Naive thymus-derived CD4-positive, alpha-beta T cell (primary cell): ENCODE measurements at regions of chr19 and their contacts with region 1.

Region 1: GRCh38 chr19:52897144-52897935 is at the start of gene ZNF320:
- DNase-seq: peak; percentile 78 to 92 (median 89)
- ATAC-seq: peak; percentile 100
- H3K4me3 ChIP-seq: peak within 1 kb of the TSS; percentile 96
- H3K4me3 Mint-ChIP-seq: peak within 1 kb of the TSS; percentile 88 to 96 (median 92)
- H3K27ac ChIP-seq: peak within 1 kb of the TSS; percentile 79
- H3K27ac Mint-ChIP-seq: peak within 1 kb of the TSS; percentile 19 to 94 (median 93)
- H3K4me1 ChIP-seq: peaks cover 4 to 5% of the 10 kb centered on the region in 2 donors
- H3K4me1 Mint-ChIP-seq: peaks cover 5 to 33% (median 17%) of the 10 kb centered on the region in 7 donors
- H3K27me3 ChIP-seq: no peaks in the 10 kb centered on the region
- H3K27me3 Mint-ChIP-seq: no peaks in the 10 kb centered on the region
- total RNA-seq, gene ZNF320: 4.5 to 13.4 (median 11.6) TPM

Region 2: DNA sequence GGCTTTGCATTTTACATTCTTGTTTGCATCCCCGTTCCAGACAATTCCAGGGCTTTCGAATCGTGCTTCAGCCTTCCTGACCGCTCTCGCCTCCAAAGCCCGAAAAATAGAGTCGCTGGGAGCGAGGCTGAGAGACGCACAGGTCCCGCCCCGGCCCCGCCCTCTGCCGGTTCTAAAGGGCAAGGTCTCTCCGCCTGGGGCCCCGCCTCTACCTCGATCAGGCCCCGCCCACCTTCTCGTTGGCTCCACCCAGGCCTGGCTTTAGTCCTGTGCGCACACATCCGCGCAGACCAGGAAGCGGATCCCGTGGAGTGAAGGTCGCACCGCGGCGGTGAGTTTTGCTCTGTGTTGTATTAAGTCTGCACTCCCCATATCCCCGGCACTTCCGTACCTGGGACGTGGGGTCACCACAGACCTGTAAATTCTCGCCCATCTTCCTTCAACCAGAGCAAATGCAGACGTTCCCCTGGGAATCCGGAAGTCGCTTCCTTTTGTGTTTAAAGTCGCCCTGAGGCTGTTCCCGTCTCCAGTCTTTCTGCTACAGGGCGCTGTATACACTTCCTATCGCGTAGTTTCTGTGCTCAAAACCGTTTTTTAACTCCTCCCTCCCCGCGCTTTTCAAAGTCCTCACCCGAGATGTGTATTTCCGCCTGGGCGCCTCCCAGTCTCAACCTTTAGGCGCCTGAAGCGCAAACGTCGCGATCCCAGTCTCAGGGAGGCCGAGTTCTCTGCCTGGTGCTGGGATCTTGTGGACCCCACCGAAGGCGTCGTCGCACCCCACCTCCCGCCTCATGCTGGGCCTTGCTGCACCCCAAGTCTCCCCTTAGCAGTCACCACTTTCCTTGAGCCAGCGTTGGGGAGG is 327.1 kb before region 1 on chr19 and contains the start of gene ZNF701:
- CTCF ChIA-PET with region 1: no interaction called
- POLR2A ChIA-PET with region 1: no interaction called
- intact Hi-C with region 1: loop called in 1 of 2 experiments (anchors 1 kb)
- DNase-seq: peak; percentile 92 to 99 (median 96)
- ATAC-seq: peak; percentile 100
- H3K4me3 ChIP-seq: peak within 1 kb of the TSS; percentile 78
- H3K4me3 Mint-ChIP-seq: peak within 1 kb of the TSS; percentile 88 to 99 (median 94)
- H3K27ac ChIP-seq: peak within 1 kb of the TSS; percentile 78
- H3K27ac Mint-ChIP-seq: peak within 1 kb of the TSS; percentile 92 to 98 (median 95)
- H3K4me1 ChIP-seq: peaks cover 10 to 13% of the 10 kb centered on the region in 2 donors
- H3K4me1 Mint-ChIP-seq: peaks cover 9 to 42% (median 37%) of the 10 kb centered on the region in 7 donors
- H3K27me3 ChIP-seq: no peaks in the 10 kb centered on the region
- H3K27me3 Mint-ChIP-seq: no peaks in the 10 kb centered on the region
- total RNA-seq, gene ZNF701: 11.7 to 43.3 (median 28.3) TPM

Region 3: DNA sequence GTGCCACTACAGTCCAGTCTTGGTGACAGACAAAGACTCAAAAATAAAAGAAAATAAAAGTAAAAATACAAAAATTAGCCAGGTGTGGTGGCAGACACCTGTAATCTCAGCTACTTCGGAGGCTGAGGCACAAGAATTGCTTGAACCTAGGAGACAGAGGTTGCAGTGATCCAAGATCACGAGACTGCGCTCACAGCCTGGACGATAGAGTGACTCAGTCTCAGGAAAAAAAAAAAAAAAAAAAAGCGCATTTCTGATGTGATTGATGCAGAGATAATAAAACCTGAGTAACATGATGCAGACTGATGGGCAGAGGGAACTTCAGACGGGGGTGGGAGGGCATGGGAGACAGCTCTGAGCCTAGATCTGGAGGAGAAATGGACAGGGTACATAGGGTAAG is 135.6 kb before region 1 on chr19:
- CTCF ChIA-PET with region 1: no interaction called
- POLR2A ChIA-PET with region 1: no interaction called
- intact Hi-C with region 1: no loop called
- DNase-seq: no peak
- ATAC-seq: no peak
- H3K4me3 ChIP-seq: no peak overlapping the region
- H3K4me3 Mint-ChIP-seq: no peak overlapping the region
- H3K27ac ChIP-seq: no peak overlapping the region
- H3K27ac Mint-ChIP-seq: no peak overlapping the region
- H3K4me1 ChIP-seq: no peaks in the 10 kb centered on the region
- H3K4me1 Mint-ChIP-seq: no peaks in the 10 kb centered on the region
- H3K27me3 ChIP-seq: no peaks in the 10 kb centered on the region
- H3K27me3 Mint-ChIP-seq: no peaks in the 10 kb centered on the region

Region 4: GRCh38 chr19:52778811-52779210 is 118.5 kb before region 1 on chr19:
- CTCF ChIA-PET with region 1: no interaction called
- POLR2A ChIA-PET with region 1: no interaction called
- intact Hi-C with region 1: no loop called
- DNase-seq: peak in 1 of 9 donors; percentile 55
- ATAC-seq: peak; percentile 54
- H3K4me3 ChIP-seq: no peak overlapping the region
- H3K4me3 Mint-ChIP-seq: peak overlapping the region in 2 of 10 donors; percentile 36 to 43
- H3K27ac ChIP-seq: no peak overlapping the region
- H3K27ac Mint-ChIP-seq: peak overlapping the region in 4 of 9 donors; percentile 20 to 81 (median 45)
- H3K4me1 ChIP-seq: peaks cover 0 to 13% of the 10 kb centered on the region in 2 donors
- H3K4me1 Mint-ChIP-seq: peaks cover 0 to 24% (median 5%) of the 10 kb centered on the region in 7 donors
- H3K27me3 ChIP-seq: no peaks in the 10 kb centered on the region
- H3K27me3 Mint-ChIP-seq: no peaks in the 10 kb centered on the region

Region 5: DNA sequence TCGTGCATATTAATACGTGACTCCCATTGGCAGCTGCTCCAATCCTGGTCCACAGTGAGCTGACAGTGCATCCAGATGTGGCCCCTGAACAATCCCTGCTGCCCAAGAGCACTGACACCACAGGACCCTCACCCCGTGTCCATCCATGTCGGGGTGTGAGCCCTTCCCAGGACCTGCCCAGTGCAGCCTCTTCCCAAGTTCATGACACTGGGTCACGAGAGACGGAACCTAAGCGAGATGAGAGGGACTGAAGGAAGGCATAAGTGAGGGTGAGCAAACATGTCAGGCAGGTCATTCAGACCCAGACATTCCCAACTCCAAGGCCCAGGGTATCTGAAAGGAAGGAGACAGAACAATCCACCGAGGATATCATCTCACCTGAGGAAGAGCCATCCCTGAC is 43.5 kb before region 1 on chr19:
- CTCF ChIA-PET with region 1: no interaction called
- POLR2A ChIA-PET with region 1: no interaction called
- intact Hi-C with region 1: loop called in 1 of 2 experiments (anchors 1 kb)
- DNase-seq: no peak
- ATAC-seq: no peak
- H3K4me3 ChIP-seq: no peak overlapping the region
- H3K4me3 Mint-ChIP-seq: peak overlapping the region in 1 of 10 donors; percentile 53
- H3K27ac ChIP-seq: no peak overlapping the region
- H3K27ac Mint-ChIP-seq: no peak overlapping the region
- H3K4me1 ChIP-seq: no peaks in the 10 kb centered on the region
- H3K4me1 Mint-ChIP-seq: peaks cover 15 to 39% (median 32%) of the 10 kb centered on the region in 7 donors
- H3K27me3 ChIP-seq: no peaks in the 10 kb centered on the region
- H3K27me3 Mint-ChIP-seq: no peaks in the 10 kb centered on the region

Region 6: GRCh38 chr19:52942386-52943133 is 45.2 kb after region 1 on chr19:
- CTCF ChIA-PET with region 1: no interaction called
- POLR2A ChIA-PET with region 1: no interaction called
- intact Hi-C with region 1: loop called (anchors 1 kb)
- DNase-seq: peak; percentile 88 to 99 (median 95)
- ATAC-seq: peak; percentile 100
- H3K4me3 ChIP-seq: peak overlapping the region; percentile 98
- H3K4me3 Mint-ChIP-seq: peak overlapping the region; percentile 87 to 95 (median 92)
- H3K27ac ChIP-seq: peak overlapping the region; percentile 85
- H3K27ac Mint-ChIP-seq: peak overlapping the region; percentile 33 to 94 (median 89)
- H3K4me1 ChIP-seq: peaks cover 0 to 4% of the 10 kb centered on the region in 2 donors
- H3K4me1 Mint-ChIP-seq: peaks cover 12 to 27% (median 16%) of the 10 kb centered on the region in 7 donors
- H3K27me3 ChIP-seq: no peaks in the 10 kb centered on the region
- H3K27me3 Mint-ChIP-seq: no peaks in the 10 kb centered on the region

Region 7: DNA sequence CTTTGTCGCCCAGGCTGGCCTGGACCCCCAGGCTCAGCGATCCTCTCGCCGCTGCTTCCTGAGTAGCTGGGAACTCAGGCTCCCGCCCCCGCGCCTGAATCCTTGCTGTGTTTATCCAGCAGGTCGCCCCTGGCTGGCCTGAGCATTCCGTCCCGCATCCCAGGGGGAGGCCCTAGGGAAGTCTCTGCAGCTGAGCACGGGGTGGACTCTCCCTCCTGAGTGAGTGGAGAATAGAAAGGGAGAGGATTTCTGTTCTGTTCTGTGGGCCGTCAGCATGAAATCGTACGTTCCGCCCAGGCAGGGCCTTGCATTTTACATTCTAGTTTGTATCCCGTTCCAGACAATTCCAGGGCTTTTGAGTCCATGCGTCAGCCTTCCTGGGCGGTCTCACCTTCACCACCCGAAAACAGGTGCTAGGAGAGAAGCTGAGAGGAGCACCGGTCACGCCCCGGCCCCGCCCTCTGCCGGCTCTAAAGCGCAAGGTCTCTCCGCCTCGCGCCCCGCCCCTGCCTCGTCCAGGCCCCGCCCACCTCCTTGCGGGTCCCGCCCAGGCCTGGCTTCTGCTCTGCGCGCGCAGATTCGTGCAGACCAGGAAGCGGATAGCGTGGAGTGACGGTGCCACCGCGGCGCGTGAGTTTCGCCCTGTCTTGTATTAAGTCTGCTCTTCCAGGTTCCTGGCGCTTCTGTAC is 534.2 kb after region 1 on chr19 and contains the start of gene ZNF761:
- CTCF ChIA-PET with region 1: no interaction called
- POLR2A ChIA-PET with region 1: no interaction called
- intact Hi-C with region 1: loop called in 1 of 2 experiments (anchors 1 kb)
- DNase-seq: peak; percentile 94 to 99 (median 98)
- ATAC-seq: peak; percentile 100
- H3K4me3 ChIP-seq: peak within 1 kb of the TSS; percentile 91
- H3K4me3 Mint-ChIP-seq: peak within 1 kb of the TSS; percentile 94 to 99 (median 97)
- H3K27ac ChIP-seq: peak within 1 kb of the TSS; percentile 79
- H3K27ac Mint-ChIP-seq: peak within 1 kb of the TSS; percentile 90 to 99 (median 96)
- H3K4me1 ChIP-seq: peaks cover 6 to 16% of the 10 kb centered on the region in 2 donors
- H3K4me1 Mint-ChIP-seq: peaks cover 20 to 55% (median 35%) of the 10 kb centered on the region in 7 donors
- H3K27me3 ChIP-seq: no peaks in the 10 kb centered on the region
- H3K27me3 Mint-ChIP-seq: no peaks in the 10 kb centered on the region
- total RNA-seq, gene ZNF761: 8.0 to 18.8 (median 13.1) TPM